GM12878 (cell line): ENCODE measurements at regions of chr12 and their contacts with region 1.

Region 1: DNA sequence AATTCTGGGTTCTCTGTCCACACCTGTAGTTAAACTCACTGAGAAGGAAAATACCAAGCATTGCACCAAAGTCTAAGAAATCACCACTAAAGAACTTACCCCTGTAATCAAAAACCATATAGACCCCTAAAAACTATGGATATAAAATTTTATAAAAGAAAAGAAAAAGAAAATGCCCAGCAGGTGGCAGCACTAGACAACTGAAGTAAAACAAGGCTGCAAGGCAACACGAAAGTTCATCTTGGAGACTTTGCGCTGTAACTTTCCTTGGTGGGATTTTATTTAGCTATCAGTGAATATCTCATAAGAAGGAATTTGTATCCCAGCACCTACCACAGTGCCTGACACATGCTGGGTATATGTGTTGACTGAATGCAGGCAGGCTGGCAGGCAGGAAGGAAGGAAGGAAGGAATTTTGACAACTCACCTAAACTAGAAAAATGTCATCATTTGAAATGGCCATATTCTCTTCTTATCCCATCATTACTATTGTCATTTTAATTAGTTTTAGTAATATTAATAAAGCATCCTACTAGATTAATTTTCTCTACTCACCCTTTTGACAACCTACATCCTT is 68.2 kb upstream of the ETV6 start:
- DNase-seq: no peak
- ATAC-seq: no peak
- H3K4me3 ChIP-seq: no peak overlapping the region
- H3K27ac ChIP-seq: peak overlapping the region; percentile 48; the same call in 1 of the 2 replicates
- H3K4me1 ChIP-seq: peaks cover 38% of the 10 kb centered on the region
- H3K27me3 ChIP-seq: no peaks in the 10 kb centered on the region
- CTCF ChIP-seq: peak; percentile 34 to 58 (median 37); a peak in 3 of 6 replicates
- EP300 ChIP-seq: no peak
- POLR2A ChIP-seq: no peak
- RAD21 ChIP-seq: peak; percentile 91

Region 2: DNA sequence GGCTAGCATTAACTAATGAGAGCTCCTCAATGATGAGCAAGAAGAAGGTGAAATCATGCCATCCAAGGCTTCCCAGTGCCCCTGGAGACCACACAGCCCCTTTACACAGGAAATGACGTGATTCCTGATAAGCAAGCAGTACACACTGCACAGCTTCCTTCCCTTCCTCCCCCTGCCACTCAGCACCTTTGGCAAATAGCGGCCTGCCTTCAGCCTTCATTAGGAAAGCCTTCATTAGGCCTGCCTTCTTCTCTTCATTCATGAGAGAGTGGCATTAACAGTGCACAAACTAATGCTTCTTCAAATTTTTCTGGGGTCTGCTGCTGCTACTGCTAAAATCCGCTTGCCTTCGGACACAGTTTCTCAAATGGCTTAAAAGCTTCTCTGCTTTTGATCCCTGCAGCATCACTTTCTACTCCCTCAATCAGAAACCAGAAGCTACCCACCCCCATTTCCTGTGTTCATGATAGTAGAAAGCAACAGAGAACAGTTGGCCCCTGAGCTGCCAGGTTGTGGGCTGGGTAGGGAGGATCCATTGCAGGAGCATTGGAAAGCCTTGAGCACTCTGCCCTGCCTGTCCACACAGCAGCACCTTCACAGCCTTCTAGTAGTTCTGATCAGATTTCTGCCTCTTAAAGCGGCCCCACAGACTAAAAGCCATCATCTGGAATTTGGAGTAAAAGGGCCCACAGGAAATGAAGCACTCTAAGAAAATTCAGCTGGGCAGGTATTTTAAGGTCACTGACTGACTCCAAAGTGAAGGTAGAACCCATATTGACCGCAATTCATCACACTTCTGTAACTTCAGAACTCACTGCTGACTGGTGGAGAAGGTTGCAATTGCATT is 35.6 kb before region 1 on chr12:
- CTCF ChIA-PET with region 1: interaction called, 148 read pairs
- POLR2A ChIA-PET with region 1: interaction called, 9 read pairs
- RAD21 ChIA-PET with region 1: interaction called, 31 read pairs
- SMC1A ChIA-PET with region 1: interaction called, 225 read pairs
- in situ Hi-C with region 1: no loop called
- intact Hi-C with region 1: no loop called
- DNase-seq: peak; percentile 78
- ATAC-seq: peak; percentile 90
- H3K4me3 ChIP-seq: peak overlapping the region; percentile 31; the same call in 1 of the 2 replicates
- H3K27ac ChIP-seq: peak overlapping the region; percentile 94
- H3K4me1 ChIP-seq: peaks cover 27% of the 10 kb centered on the region
- H3K27me3 ChIP-seq: no peaks in the 10 kb centered on the region
- CTCF ChIP-seq: peak in 2 of 3 experiments; percentile 39 to 44; a peak in 2 of 6 replicates
- EP300 ChIP-seq: 0 out of 4 replicates have a peak, but pooled peaks of 1 of the 2 experiments have one; percentile 30
- POLR2A ChIP-seq: peak; percentile 65
- RAD21 ChIP-seq: no peak

Region 3: GRCh38 chr12:11648831-11649702 is 67.8 kb after region 1 on chr12 and contains the start of gene ETV6:
- CTCF ChIA-PET with region 1: interaction called, 6 read pairs
- POLR2A ChIA-PET with region 1: interaction called, 3 read pairs
- RAD21 ChIA-PET with region 1: interaction called, 15 read pairs
- SMC1A ChIA-PET with region 1: interaction called, 28 read pairs
- in situ Hi-C with region 1: no loop called
- intact Hi-C with region 1: loop called (anchors 1 kb)
- DNase-seq: peak; percentile 86
- ATAC-seq: peak; percentile 31
- H3K4me3 ChIP-seq: peak within 1 kb of the TSS; percentile 85
- H3K27ac ChIP-seq: peak within 1 kb of the TSS; percentile 99
- H3K4me1 ChIP-seq: peaks cover 3% of the 10 kb centered on the region; the same call in 1 of the 2 replicates
- H3K27me3 ChIP-seq: no peaks in the 10 kb centered on the region
- CTCF ChIP-seq: no peak
- EP300 ChIP-seq: peak; percentile 33 to 46; a peak in 3 of 4 replicates
- POLR2A ChIP-seq: peak; percentile 80
- RAD21 ChIP-seq: no peak; the same call in 1 of the 2 replicates
- polyA plus RNA-seq, gene ETV6: 6.6 to 10.4 TPM

Region 4: GRCh38 chr12:11758510-11759493 is 177.5 kb after region 1 on chr12:
- CTCF ChIA-PET with region 1: interaction called, 8 read pairs
- POLR2A ChIA-PET with region 1: interaction called, 6 read pairs
- RAD21 ChIA-PET with region 1: interaction called, 28 read pairs
- SMC1A ChIA-PET with region 1: interaction called, 70 read pairs
- in situ Hi-C with region 1: loop called (anchors 5 kb)
- intact Hi-C with region 1: no loop called
- DNase-seq: peak; percentile 93
- ATAC-seq: peak; percentile 76
- H3K4me3 ChIP-seq: no peak overlapping the region; the same call in 1 of the 2 replicates
- H3K27ac ChIP-seq: peak overlapping the region; percentile 100
- H3K4me1 ChIP-seq: peaks cover 70% of the 10 kb centered on the region
- H3K27me3 ChIP-seq: no peaks in the 10 kb centered on the region
- CTCF ChIP-seq: no peak
- EP300 ChIP-seq: peak; percentile 78 to 91; a peak in 1 of 4 replicates
- POLR2A ChIP-seq: peak; percentile 63
- RAD21 ChIP-seq: peak; percentile 17; the same call in 1 of the 2 replicates

Region 5: GRCh38 chr12:11827091-11828061 is 246.1 kb after region 1 on chr12:
- CTCF ChIA-PET with region 1: interaction called, 5 read pairs
- POLR2A ChIA-PET with region 1: interaction called, 3 read pairs
- RAD21 ChIA-PET with region 1: interaction called, 4 read pairs
- SMC1A ChIA-PET with region 1: interaction called, 13 read pairs
- in situ Hi-C with region 1: no loop called
- intact Hi-C with region 1: no loop called
- DNase-seq: no peak
- ATAC-seq: no peak
- H3K4me3 ChIP-seq: no peak overlapping the region
- H3K27ac ChIP-seq: 0 out of 2 replicates have a peak overlapping the region, but pooled peaks have one; percentile 6
- H3K4me1 ChIP-seq: peaks cover 64% of the 10 kb centered on the region
- H3K27me3 ChIP-seq: no peaks in the 10 kb centered on the region
- CTCF ChIP-seq: no peak
- EP300 ChIP-seq: no peak
- POLR2A ChIP-seq: no peak
- RAD21 ChIP-seq: no peak

Region 6: GRCh38 chr12:12024911-12025682 is 443.8 kb after region 1 on chr12:
- CTCF ChIA-PET with region 1: interaction called, 278 read pairs
- POLR2A ChIA-PET with region 1: interaction called, 6 read pairs
- RAD21 ChIA-PET with region 1: interaction called, 12 read pairs
- SMC1A ChIA-PET with region 1: interaction called, 10 read pairs
- in situ Hi-C with region 1: loop called (anchors 5 kb)
- intact Hi-C with region 1: no loop called
- DNase-seq: peak; percentile 93
- ATAC-seq: peak; percentile 83
- H3K4me3 ChIP-seq: peak overlapping the region; percentile 4
- H3K27ac ChIP-seq: peak overlapping the region; percentile 74
- H3K4me1 ChIP-seq: peaks cover 40% of the 10 kb centered on the region
- H3K27me3 ChIP-seq: no peaks in the 10 kb centered on the region
- CTCF ChIP-seq: no peak
- EP300 ChIP-seq: peak; percentile 92 to 94
- POLR2A ChIP-seq: no peak
- RAD21 ChIP-seq: no peak

Region 7: GRCh38 chr12:12334367-12335040 is 753.2 kb after region 1 on chr12:
- CTCF ChIA-PET with region 1: interaction called, 38 read pairs
- POLR2A ChIA-PET with region 1: interaction called, 3 read pairs
- RAD21 ChIA-PET with region 1: interaction called, 10 read pairs
- SMC1A ChIA-PET with region 1: interaction called, 5 read pairs
- in situ Hi-C with region 1: loop called (anchors 10 kb)
- intact Hi-C with region 1: loop called (anchors 2 kb)
- DNase-seq: peak; percentile 19
- ATAC-seq: peak; percentile 90
- H3K4me3 ChIP-seq: no peak overlapping the region
- H3K27ac ChIP-seq: no peak overlapping the region
- H3K4me1 ChIP-seq: 0 out of 2 replicates have a peak, but pooled peaks cover 3% of the 10 kb centered on the region
- H3K27me3 ChIP-seq: no peaks in the 10 kb centered on the region
- CTCF ChIP-seq: peak; percentile 81 to 89 (median 82)
- EP300 ChIP-seq: no peak
- POLR2A ChIP-seq: no peak
- RAD21 ChIP-seq: peak; percentile 58